ENCODE measurements at regions of chr3 and their contacts with region 1.

Region 1: DNA sequence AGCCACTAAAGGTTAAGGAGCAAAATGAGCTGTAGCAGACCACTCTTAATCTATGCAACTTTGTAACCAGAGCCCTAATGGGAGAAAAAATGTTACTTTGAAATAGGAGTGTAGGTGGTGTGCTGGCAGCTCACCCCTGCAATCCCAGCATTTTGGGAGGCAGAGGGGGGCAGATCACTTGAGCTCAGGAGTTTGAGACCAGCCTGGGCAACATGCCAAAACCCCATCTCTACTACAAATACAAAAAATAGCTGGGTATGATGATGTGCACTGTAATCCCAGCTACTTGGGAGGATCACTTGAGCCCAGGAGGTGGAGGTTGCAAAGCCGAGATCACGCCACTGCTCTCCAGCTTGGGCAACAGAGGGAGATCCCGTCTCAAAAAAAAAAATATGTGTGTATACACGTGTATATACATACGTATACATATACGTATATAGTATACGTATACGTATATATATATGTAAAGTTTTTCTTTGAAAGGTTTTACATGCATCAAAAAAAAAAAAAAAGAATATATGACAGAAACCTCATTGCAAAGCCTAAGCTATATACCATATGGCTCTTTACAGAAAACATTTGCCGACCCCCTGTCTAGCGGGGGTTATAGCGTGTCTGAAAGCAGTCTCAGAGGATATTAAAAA is 15.7 kb downstream of the CAPN7 start:
- DNase-seq: no peak
- H3K4me3 ChIP-seq: no peak overlapping the region
- H3K27ac ChIP-seq: no peak overlapping the region
- H3K4me1 ChIP-seq: peaks cover 11% of the 10 kb centered on the region
- H3K27me3 ChIP-seq: no peaks in the 10 kb centered on the region
- CTCF ChIP-seq: no peak

Region 2: DNA sequence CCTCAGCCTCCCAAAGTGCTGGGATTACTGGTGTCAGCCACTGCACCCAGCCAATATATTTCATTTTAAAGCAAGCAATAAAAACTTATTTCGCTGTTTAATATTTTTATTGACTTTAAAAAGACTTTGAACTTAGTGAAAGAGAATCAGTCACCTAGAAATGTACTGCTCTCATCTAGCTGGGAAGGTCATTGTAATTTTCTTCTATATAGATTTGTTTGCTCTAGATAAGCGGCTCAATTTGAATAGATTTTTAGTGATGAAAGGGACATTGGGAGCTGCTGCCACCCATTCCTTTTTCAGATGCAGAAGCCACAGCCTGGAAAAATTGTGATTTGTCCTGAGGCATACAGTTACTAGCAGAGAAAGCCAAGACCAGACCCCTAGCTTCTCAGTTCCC is 24.5 kb after region 1 on chr3:
- CTCF ChIA-PET with region 1: interaction called, 33 read pairs
- dilution Hi-C with region 1: no loop called
- in situ Hi-C with region 1: no loop called
- intact Hi-C with region 1: no loop called
- DNase-seq: no peak
- H3K4me3 ChIP-seq: no peak overlapping the region
- H3K27ac ChIP-seq: no peak overlapping the region
- H3K4me1 ChIP-seq: no peaks in the 10 kb centered on the region
- H3K27me3 ChIP-seq: no peaks in the 10 kb centered on the region
- CTCF ChIP-seq: no peak

Region 3: DNA sequence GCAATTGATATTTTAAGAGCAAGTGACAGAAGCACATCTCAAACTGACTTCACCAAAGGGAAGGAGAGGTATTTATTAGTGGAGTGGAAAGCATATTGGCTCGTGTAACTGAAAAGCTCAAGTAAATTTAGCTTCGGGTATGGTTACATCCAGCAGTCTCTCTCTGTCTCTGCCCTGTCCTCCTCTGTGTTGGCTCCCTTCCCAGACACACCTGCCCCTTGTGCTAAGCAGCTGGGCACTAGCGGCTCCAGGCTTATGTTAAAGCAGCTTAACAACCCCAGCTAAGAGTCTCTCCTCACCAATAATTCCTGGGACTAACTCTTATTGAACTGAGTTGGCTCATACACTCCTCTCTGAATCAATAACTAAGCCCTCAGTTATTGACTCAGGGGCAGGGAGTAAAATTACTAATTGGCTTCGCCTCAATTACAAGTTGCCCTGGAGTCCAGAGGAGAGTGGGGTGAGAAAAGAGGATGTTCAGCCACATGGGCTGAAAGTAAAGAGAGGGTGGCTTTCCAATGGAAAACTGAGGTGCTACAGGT is 123.4 kb after region 1 on chr3:
- CTCF ChIA-PET with region 1: no interaction called
- dilution Hi-C with region 1: no loop called
- in situ Hi-C with region 1: no loop called
- intact Hi-C with region 1: no loop called
- DNase-seq: no peak
- H3K4me3 ChIP-seq: no peak overlapping the region
- H3K27ac ChIP-seq: no peak overlapping the region
- H3K4me1 ChIP-seq: peaks cover 2% of the 10 kb centered on the region
- H3K27me3 ChIP-seq: no peaks in the 10 kb centered on the region
- CTCF ChIP-seq: no peak